ENCODE measurements at regions of chr5 and their contacts with region 1.

Region 1: GRCh38 chr5:55994574-55995333 is at the start of gene IL6ST:
- DNase-seq: peak; percentile 96
- H3K4me3 Mint-ChIP-seq: peak within 1 kb of the TSS; percentile 97
- H3K27ac Mint-ChIP-seq: peak within 1 kb of the TSS; percentile 94
- H3K4me1 Mint-ChIP-seq: peaks cover 62% of the 10 kb centered on the region
- H3K27me3 Mint-ChIP-seq: no peaks in the 10 kb centered on the region
- total RNA-seq, gene IL6ST: 51.0 to 53.4 TPM

Region 2: GRCh38 chr5:55724281-55724680 is 270.5 kb before region 1 on chr5:
- CTCF ChIA-PET with region 1: no interaction called
- POLR2A ChIA-PET with region 1: no interaction called
- DNase-seq: no peak
- H3K4me3 Mint-ChIP-seq: no peak overlapping the region
- H3K27ac Mint-ChIP-seq: no peak overlapping the region
- H3K4me1 Mint-ChIP-seq: peaks cover 7% of the 10 kb centered on the region
- H3K27me3 Mint-ChIP-seq: no peaks in the 10 kb centered on the region

Region 3: GRCh38 chr5:55982957-55983381 is 11.8 kb before region 1 on chr5:
- CTCF ChIA-PET with region 1: interaction called, 5 read pairs
- POLR2A ChIA-PET with region 1: interaction called, 12 read pairs
- DNase-seq: no peak
- H3K4me3 Mint-ChIP-seq: no peak overlapping the region
- H3K27ac Mint-ChIP-seq: no peak overlapping the region
- H3K4me1 Mint-ChIP-seq: peaks cover 54% of the 10 kb centered on the region
- H3K27me3 Mint-ChIP-seq: no peaks in the 10 kb centered on the region

Region 4: GRCh38 chr5:56059859-56060258 is 65.1 kb after region 1 on chr5:
- CTCF ChIA-PET with region 1: no interaction called
- POLR2A ChIA-PET with region 1: interaction called, 11 read pairs
- DNase-seq: no peak
- H3K4me3 Mint-ChIP-seq: no peak overlapping the region
- H3K27ac Mint-ChIP-seq: no peak overlapping the region
- H3K4me1 Mint-ChIP-seq: peaks cover 57% of the 10 kb centered on the region
- H3K27me3 Mint-ChIP-seq: peaks cover 47% of the 10 kb centered on the region

Region 5: GRCh38 chr5:56244627-56245026 is 249.9 kb after region 1 on chr5:
- CTCF ChIA-PET with region 1: no interaction called
- POLR2A ChIA-PET with region 1: no interaction called
- DNase-seq: no peak
- H3K4me3 Mint-ChIP-seq: no peak overlapping the region
- H3K27ac Mint-ChIP-seq: no peak overlapping the region
- H3K4me1 Mint-ChIP-seq: no peaks in the 10 kb centered on the region
- H3K27me3 Mint-ChIP-seq: peaks cover 9% of the 10 kb centered on the region

Measured in activated CD4-positive, alpha-beta memory T cell treated with anti-CD3 and anti-CD28 coated beads, Interleukin-2, amount 10 ng/mL, durations not matched to agents 7 days and 5 days (primary cell).